ENCODE measurements at regions of chr21 and their contacts with region 1.

Region 1: GRCh38 chr21:31509194-31510017 is 150.1 kb upstream of the SOD1 start:
- DNase-seq: peak; percentile 45 to 85 (median 70)
- ATAC-seq: peak; percentile 82
- H3K4me3 ChIP-seq: no peak overlapping the region
- H3K4me3 Mint-ChIP-seq: peak overlapping the region; percentile 62
- H3K27ac ChIP-seq: no peak overlapping the region
- H3K27ac Mint-ChIP-seq: peak overlapping the region; percentile 29
- H3K4me1 ChIP-seq: peaks cover 24% of the 10 kb centered on the region
- H3K4me1 Mint-ChIP-seq: peaks cover 39% of the 10 kb centered on the region
- H3K27me3 ChIP-seq: no peaks in the 10 kb centered on the region
- H3K27me3 Mint-ChIP-seq: no peaks in the 10 kb centered on the region
- CTCF ChIP-seq: peak; percentile 53

Region 2: GRCh38 chr21:31410499-31411131 is 98.8 kb before region 1 on chr21:
- CTCF ChIA-PET with region 1: no interaction called
- POLR2A ChIA-PET with region 1: no interaction called
- intact Hi-C with region 1: loop called in 1 of 2 experiments (anchors 5 kb)
- DNase-seq: peak in 7 of 14 experiments; percentile 9 to 48 (median 39)
- ATAC-seq: peak; percentile 80
- H3K4me3 ChIP-seq: no peak overlapping the region
- H3K4me3 Mint-ChIP-seq: no peak overlapping the region
- H3K27ac ChIP-seq: no peak overlapping the region
- H3K27ac Mint-ChIP-seq: no peak overlapping the region
- H3K4me1 ChIP-seq: peaks cover 9% of the 10 kb centered on the region
- H3K4me1 Mint-ChIP-seq: peaks cover 13% of the 10 kb centered on the region
- H3K27me3 ChIP-seq: no peaks in the 10 kb centered on the region
- H3K27me3 Mint-ChIP-seq: no peaks in the 10 kb centered on the region
- CTCF ChIP-seq: no peak